PC-3 (cell line): ENCODE measurements at regions of chr6 and their contacts with region 1.

Region 1: DNA sequence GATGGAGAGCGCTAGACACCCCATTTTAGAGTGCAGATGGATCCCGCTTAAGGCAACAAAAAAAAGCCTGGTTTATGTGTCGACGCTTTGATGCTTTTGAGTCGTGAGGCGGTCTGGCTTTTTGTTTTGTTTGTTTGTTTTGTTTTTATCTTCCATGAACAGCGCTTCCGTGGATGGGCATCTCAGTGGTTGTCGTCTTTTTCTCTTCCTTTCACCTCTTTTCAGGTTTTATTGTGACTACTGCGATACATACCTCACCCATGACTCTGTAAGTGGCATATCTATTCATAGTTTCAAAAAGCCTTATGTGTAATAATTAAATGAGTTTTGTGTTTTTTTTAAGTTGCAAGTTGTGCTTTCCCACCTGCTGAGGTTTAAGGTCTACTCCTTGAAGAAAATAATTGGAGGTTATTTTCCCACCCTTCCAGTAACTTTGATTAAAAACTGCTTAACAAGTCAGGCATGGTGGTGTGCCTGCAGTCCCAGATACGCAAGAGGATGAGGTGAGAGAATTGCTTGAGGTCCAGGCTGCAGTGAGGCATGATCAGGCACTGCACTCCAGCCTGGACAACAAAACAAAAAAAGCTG is 476 bp downstream of the SNRPC start:
- DNase-seq: no peak
- ATAC-seq: no peak
- H3K4me3 ChIP-seq: peak overlapping the region; percentile 82
- H3K27ac ChIP-seq: peak overlapping the region; percentile 88
- H3K4me1 ChIP-seq: no peaks in the 10 kb centered on the region
- H3K27me3 ChIP-seq: no peaks in the 10 kb centered on the region
- CTCF ChIP-seq: no peak

Region 2: DNA sequence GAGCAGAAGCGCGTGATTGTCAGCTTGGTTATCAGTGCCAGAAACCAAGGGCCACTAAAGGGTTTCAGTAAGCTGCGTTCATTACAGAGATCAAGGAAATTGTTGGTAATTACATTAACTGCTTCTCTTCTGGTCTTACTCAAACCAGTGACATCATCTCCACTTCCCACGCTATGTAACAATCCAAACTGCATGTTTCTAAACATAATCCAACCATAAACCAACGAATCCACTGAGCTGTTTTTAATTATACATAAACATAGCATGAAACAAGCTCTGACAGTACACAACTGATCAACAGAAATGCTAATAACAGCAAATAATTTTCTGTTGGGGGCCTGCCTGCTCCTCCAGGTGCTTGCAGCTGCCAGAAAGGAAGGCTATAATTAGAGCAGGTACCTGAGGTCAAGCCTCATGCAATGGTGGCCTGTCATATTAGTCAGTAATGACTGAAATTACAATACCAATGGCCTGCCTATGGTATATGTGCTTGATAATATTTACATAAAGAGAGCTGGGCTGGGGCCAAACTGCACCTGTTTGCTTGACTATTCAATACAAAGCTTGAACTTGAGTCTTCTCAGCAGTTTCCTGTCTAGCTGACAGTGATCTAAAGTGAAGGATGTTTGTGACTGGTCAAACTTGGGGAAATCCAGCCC is 101.3 kb before region 1 on chr6:
- CTCF ChIA-PET with region 1: interaction called, 3 read pairs
- POLR2A ChIA-PET with region 1: no interaction called
- intact Hi-C with region 1: loop called (anchors 10 kb)
- DNase-seq: peak; percentile 72
- ATAC-seq: peak; percentile 35
- H3K4me3 ChIP-seq: peak overlapping the region; percentile 65
- H3K27ac ChIP-seq: peak overlapping the region; percentile 98
- H3K4me1 ChIP-seq: peaks cover 46% of the 10 kb centered on the region
- H3K27me3 ChIP-seq: no peaks in the 10 kb centered on the region
- CTCF ChIP-seq: no peak

Region 3: DNA sequence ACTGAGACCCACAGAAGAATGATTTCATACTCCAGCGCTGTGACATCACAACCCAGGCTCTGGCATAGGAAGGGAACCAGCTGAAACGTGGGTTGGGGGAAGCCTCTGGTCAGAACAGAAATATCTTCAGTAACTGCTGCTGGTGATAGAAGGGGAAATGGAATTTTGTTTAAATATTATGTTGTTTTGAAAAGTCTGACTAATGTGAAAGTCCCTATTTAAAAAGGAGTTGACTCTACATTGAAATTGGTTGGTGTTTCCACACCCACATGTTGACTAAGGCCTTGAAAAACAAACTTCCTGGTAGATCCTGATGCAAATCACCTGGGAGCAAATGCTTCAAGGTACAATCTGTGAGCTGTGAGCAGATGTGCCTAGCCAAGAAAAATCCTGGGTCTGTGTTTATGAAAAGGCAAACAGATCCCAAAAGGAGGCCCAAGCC is 407.9 kb after region 1 on chr6:
- CTCF ChIA-PET with region 1: no interaction called
- POLR2A ChIA-PET with region 1: no interaction called
- intact Hi-C with region 1: no loop called
- DNase-seq: peak; percentile 82
- ATAC-seq: peak; percentile 87
- H3K4me3 ChIP-seq: no peak overlapping the region
- H3K27ac ChIP-seq: peak overlapping the region; percentile 92
- H3K4me1 ChIP-seq: peaks cover 26% of the 10 kb centered on the region
- H3K27me3 ChIP-seq: no peaks in the 10 kb centered on the region
- CTCF ChIP-seq: no peak